Naive thymus-derived CD4-positive, alpha-beta T cell (primary cell): ENCODE measurements at regions of chr10 and their contacts with region 1.

Region 1: GRCh38 chr10:31928549-31929260 is at the start of gene ARHGAP12:
- DNase-seq: peak; percentile 76 to 90 (median 85)
- ATAC-seq: peak; percentile 87
- H3K4me3 ChIP-seq: peak within 1 kb of the TSS; percentile 90
- H3K4me3 Mint-ChIP-seq: peak within 1 kb of the TSS; percentile 73 to 95 (median 92)
- H3K27ac ChIP-seq: peak within 1 kb of the TSS; percentile 84
- H3K27ac Mint-ChIP-seq: peak within 1 kb of the TSS; percentile 66 to 93 (median 86)
- H3K4me1 ChIP-seq: peaks cover 10% of the 10 kb centered on the region in 2 donors
- H3K4me1 Mint-ChIP-seq: peaks cover 30 to 51% (median 47%) of the 10 kb centered on the region in 7 donors
- H3K27me3 ChIP-seq: no peaks in the 10 kb centered on the region
- H3K27me3 Mint-ChIP-seq: peaks cover 0 to 9% (median 0%) of the 10 kb centered on the region in 5 donors
- total RNA-seq, gene ARHGAP12: 10.6 to 34.6 (median 31.4) TPM

Region 2: GRCh38 chr10:30348378-30348776 is 1580.3 kb before region 1 on chr10:
- CTCF ChIA-PET with region 1: no interaction called
- POLR2A ChIA-PET with region 1: no interaction called
- intact Hi-C with region 1: loop called in 1 of 2 experiments (anchors 10 kb)
- DNase-seq: no peak
- ATAC-seq: no peak
- H3K4me3 ChIP-seq: peak overlapping the region; percentile 86
- H3K4me3 Mint-ChIP-seq: peak overlapping the region; percentile 92 to 99 (median 97)
- H3K27ac ChIP-seq: peak overlapping the region; percentile 84
- H3K27ac Mint-ChIP-seq: peak overlapping the region; percentile 87 to 98 (median 92)
- H3K4me1 ChIP-seq: peaks cover 11 to 18% of the 10 kb centered on the region in 2 donors
- H3K4me1 Mint-ChIP-seq: peaks cover 40 to 63% (median 55%) of the 10 kb centered on the region in 7 donors
- H3K27me3 ChIP-seq: no peaks in the 10 kb centered on the region
- H3K27me3 Mint-ChIP-seq: peaks cover 0 to 5% (median 0%) of the 10 kb centered on the region in 5 donors

Region 3: DNA sequence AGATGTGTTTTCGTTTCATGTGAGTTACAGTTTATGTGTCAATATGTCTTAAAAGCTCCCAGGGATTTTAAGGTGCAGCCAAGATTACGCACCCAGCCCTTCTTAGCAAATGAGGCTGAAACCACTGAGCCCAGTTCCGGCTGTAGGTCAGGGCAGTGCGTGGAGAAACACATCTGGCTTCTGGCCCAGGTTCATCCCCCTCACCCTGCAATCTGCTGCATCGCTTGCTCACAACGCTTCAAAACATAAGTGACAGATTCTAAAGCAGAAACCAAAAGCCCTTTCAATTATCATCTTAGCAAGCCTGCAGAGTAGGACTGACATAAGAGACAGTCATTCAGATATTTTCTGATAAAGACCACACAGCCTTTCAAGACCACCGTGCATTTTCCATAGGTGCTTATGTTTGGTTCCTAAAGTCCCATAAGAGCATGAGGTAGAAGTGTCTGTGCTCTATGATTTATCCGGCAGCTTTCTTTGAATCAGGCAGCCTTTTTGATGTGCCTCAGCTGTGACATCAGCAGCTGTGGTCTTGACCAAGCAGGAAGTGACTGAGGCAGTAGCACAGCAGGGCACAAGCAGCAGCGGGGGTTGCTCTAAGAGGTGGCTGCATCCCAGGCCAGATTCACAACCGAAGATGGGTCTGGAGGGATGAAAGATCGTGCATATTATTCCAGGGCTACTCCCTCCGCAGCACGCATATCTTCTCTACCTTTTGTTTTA is 1227.1 kb before region 1 on chr10:
- CTCF ChIA-PET with region 1: no interaction called
- POLR2A ChIA-PET with region 1: no interaction called
- intact Hi-C with region 1: loop called (anchors 5 to 10 kb)
- DNase-seq: peak in 8 of 9 donors; percentile 68 to 81 (median 74)
- ATAC-seq: peak; percentile 80
- H3K4me3 ChIP-seq: peak overlapping the region; percentile 31
- H3K4me3 Mint-ChIP-seq: peak overlapping the region; percentile 68 to 98 (median 88)
- H3K27ac ChIP-seq: peak overlapping the region; percentile 86
- H3K27ac Mint-ChIP-seq: peak overlapping the region; percentile 88 to 98 (median 96)
- H3K4me1 ChIP-seq: peaks cover 63 to 74% of the 10 kb centered on the region in 2 donors
- H3K4me1 Mint-ChIP-seq: peaks cover 51 to 97% (median 88%) of the 10 kb centered on the region in 7 donors
- H3K27me3 ChIP-seq: no peaks in the 10 kb centered on the region
- H3K27me3 Mint-ChIP-seq: no peaks in the 10 kb centered on the region

Region 4: GRCh38 chr10:31864834-31865518 is 63.7 kb before region 1 on chr10:
- CTCF ChIA-PET with region 1: no interaction called
- POLR2A ChIA-PET with region 1: interaction called, 3 read pairs
- intact Hi-C with region 1: loop called (anchors 1 to 5 kb)
- DNase-seq: no peak
- ATAC-seq: no peak
- H3K4me3 ChIP-seq: no peak overlapping the region
- H3K4me3 Mint-ChIP-seq: peak overlapping the region in 1 of 10 donors; percentile 40
- H3K27ac ChIP-seq: no peak overlapping the region
- H3K27ac Mint-ChIP-seq: peak overlapping the region in 3 of 9 donors; percentile 1 to 3 (median 2)
- H3K4me1 ChIP-seq: peaks cover 0 to 3% of the 10 kb centered on the region in 2 donors
- H3K4me1 Mint-ChIP-seq: peaks cover 8 to 41% (median 34%) of the 10 kb centered on the region in 7 donors
- H3K27me3 ChIP-seq: no peaks in the 10 kb centered on the region
- H3K27me3 Mint-ChIP-seq: no peaks in the 10 kb centered on the region

Region 5: GRCh38 chr10:31908157-31908556 is 20.5 kb before region 1 on chr10:
- CTCF ChIA-PET with region 1: no interaction called
- POLR2A ChIA-PET with region 1: no interaction called
- intact Hi-C with region 1: loop called in 1 of 2 experiments (anchors 2 kb)
- DNase-seq: no peak
- ATAC-seq: no peak
- H3K4me3 ChIP-seq: no peak overlapping the region
- H3K4me3 Mint-ChIP-seq: no peak overlapping the region
- H3K27ac ChIP-seq: no peak overlapping the region
- H3K27ac Mint-ChIP-seq: peak overlapping the region in 1 of 9 donors; percentile 0
- H3K4me1 ChIP-seq: peaks cover 3 to 4% of the 10 kb centered on the region in 2 donors
- H3K4me1 Mint-ChIP-seq: peaks cover 14 to 83% (median 73%) of the 10 kb centered on the region in 7 donors
- H3K27me3 ChIP-seq: no peaks in the 10 kb centered on the region
- H3K27me3 Mint-ChIP-seq: no peaks in the 10 kb centered on the region

Region 6: DNA sequence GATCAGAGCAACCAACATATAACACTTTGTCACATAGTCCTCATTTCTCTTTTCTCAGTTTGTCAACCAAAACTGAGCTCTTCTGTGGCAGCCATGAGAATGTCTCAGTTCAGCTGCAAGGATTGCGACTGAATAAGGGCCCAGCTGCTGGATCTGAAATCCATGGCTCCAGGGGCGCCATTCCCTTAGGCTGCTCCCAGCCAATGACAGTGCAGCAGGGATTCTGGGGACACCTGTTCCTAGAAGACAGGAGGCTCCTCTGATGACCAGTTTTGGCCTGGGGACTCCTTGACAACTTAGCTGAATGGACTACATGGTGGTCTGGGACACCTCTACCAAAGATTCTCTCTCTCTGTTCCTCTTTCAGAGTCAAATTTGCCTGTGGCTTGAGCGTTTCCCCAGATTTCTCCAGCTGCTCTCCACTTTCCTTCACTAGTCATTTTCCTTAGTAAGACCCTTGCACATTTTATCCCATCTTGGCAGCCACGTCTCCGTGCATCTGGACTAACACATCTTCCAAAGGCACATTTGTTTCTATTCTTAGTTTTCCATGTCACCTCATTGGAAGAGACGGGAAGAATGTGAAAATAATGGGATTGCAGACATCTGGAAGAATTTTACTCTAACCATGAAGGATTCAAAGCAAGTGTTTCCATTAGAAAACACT is 155.6 kb after region 1 on chr10:
- CTCF ChIA-PET with region 1: no interaction called
- POLR2A ChIA-PET with region 1: no interaction called
- intact Hi-C with region 1: no loop called
- DNase-seq: no peak
- ATAC-seq: no peak
- H3K4me3 ChIP-seq: no peak overlapping the region
- H3K4me3 Mint-ChIP-seq: no peak overlapping the region
- H3K27ac ChIP-seq: no peak overlapping the region
- H3K27ac Mint-ChIP-seq: no peak overlapping the region
- H3K4me1 ChIP-seq: no peaks in the 10 kb centered on the region
- H3K4me1 Mint-ChIP-seq: no peaks in the 10 kb centered on the region
- H3K27me3 ChIP-seq: no peaks in the 10 kb centered on the region
- H3K27me3 Mint-ChIP-seq: peaks cover 0 to 6% (median 0%) of the 10 kb centered on the region in 5 donors

Region 7: DNA sequence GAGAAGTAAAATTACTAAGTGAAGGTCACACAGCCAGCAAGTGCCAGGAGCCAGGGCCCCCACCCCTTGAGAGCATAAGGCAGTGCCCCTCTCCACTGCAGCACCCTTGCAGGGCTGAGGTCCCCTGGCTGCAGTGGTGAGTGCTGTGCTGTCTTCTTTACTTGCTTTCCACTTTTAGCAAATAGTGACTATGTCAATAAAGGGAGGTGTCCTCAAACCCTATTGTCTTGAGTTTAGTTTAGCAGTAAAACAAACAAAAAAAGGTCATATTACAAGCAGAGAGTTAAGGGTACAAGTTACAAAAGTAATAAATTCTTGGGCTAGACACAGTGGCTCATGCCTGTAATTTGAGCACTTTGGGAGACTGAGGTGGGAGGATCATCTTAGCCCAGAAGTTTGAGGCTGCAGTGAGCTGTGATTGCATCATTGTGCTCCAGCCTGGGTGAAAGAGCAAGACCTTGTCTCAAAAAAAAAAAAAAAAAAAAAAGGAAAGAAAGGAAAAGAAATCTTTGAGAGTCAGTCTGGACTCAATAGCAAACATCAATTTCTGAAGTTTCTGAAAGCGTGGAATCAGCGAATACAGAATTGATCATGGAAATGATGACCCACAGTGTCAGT is 166.5 kb after region 1 on chr10:
- CTCF ChIA-PET with region 1: no interaction called
- POLR2A ChIA-PET with region 1: no interaction called
- intact Hi-C with region 1: no loop called
- DNase-seq: no peak
- ATAC-seq: no peak
- H3K4me3 ChIP-seq: no peak overlapping the region
- H3K4me3 Mint-ChIP-seq: no peak overlapping the region
- H3K27ac ChIP-seq: no peak overlapping the region
- H3K27ac Mint-ChIP-seq: no peak overlapping the region
- H3K4me1 ChIP-seq: no peaks in the 10 kb centered on the region
- H3K4me1 Mint-ChIP-seq: no peaks in the 10 kb centered on the region
- H3K27me3 ChIP-seq: no peaks in the 10 kb centered on the region
- H3K27me3 Mint-ChIP-seq: peaks cover 0 to 13% (median 10%) of the 10 kb centered on the region in 5 donors

Region 8: GRCh38 chr10:32459051-32459698 is 530.5 kb after region 1 on chr10:
- CTCF ChIA-PET with region 1: no interaction called
- POLR2A ChIA-PET with region 1: no interaction called
- intact Hi-C with region 1: loop called in 1 of 2 experiments (anchors 5 kb)
- DNase-seq: peak in 7 of 9 donors; percentile 76 to 90 (median 87)
- ATAC-seq: peak; percentile 100
- H3K4me3 ChIP-seq: peak overlapping the region; percentile 34
- H3K4me3 Mint-ChIP-seq: peak overlapping the region; percentile 48 to 79 (median 68)
- H3K27ac ChIP-seq: peak overlapping the region; percentile 43
- H3K27ac Mint-ChIP-seq: peak overlapping the region; percentile 73 to 92 (median 85)
- H3K4me1 ChIP-seq: peaks cover 31 to 35% of the 10 kb centered on the region in 2 donors
- H3K4me1 Mint-ChIP-seq: peaks cover 20 to 69% (median 61%) of the 10 kb centered on the region in 7 donors
- H3K27me3 ChIP-seq: no peaks in the 10 kb centered on the region
- H3K27me3 Mint-ChIP-seq: no peaks in the 10 kb centered on the region